ENCODE measurements at regions of chr18 and their contacts with region 1.

Region 1: DNA sequence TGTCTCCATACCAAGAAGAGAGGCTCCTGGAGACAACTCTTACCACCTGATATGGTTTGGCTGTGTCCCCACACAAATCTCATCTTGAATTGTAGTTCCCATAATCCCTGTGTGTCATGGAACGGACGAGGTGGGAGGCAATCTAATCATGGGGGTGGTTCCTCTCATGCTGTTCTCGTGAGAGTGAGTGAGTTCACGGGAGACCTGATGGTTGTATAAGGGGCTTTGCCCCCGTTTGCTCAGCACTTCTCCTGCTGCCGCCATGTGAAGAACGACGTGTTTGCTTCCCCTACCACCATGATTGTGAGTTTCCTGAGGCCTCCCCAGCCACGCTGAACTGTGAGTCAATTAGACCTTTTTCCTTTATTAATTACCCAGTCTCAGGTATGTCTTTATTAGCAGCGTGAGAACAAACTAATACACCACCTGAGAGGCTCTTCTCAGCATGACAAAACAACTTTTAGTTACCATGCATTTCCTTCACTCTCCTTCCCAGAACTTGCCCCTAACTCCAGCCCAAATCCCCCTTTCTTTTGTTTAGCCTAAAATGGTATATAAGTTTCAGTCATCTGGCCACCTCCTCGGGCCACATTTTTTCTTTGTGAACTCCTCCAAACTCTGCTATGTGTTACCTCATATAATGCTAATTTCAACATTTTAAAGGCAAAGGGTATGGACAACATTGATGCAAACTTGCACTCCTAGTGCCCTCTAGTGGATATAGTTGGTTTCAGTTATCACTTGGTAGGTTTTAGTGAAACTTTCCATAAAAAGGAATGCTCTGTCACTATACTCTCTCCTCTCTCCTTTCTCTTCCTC is 58.6 kb upstream of the SLC25A52 start:
- DNase-seq: no peak
- ATAC-seq: peak; percentile 87
- H3K4me3 ChIP-seq: no peak overlapping the region
- H3K27ac ChIP-seq: no peak overlapping the region
- H3K4me1 ChIP-seq: no peaks in the 10 kb centered on the region
- H3K27me3 ChIP-seq: no peaks in the 10 kb centered on the region
- CTCF ChIP-seq: peak; percentile 77

Region 2: DNA sequence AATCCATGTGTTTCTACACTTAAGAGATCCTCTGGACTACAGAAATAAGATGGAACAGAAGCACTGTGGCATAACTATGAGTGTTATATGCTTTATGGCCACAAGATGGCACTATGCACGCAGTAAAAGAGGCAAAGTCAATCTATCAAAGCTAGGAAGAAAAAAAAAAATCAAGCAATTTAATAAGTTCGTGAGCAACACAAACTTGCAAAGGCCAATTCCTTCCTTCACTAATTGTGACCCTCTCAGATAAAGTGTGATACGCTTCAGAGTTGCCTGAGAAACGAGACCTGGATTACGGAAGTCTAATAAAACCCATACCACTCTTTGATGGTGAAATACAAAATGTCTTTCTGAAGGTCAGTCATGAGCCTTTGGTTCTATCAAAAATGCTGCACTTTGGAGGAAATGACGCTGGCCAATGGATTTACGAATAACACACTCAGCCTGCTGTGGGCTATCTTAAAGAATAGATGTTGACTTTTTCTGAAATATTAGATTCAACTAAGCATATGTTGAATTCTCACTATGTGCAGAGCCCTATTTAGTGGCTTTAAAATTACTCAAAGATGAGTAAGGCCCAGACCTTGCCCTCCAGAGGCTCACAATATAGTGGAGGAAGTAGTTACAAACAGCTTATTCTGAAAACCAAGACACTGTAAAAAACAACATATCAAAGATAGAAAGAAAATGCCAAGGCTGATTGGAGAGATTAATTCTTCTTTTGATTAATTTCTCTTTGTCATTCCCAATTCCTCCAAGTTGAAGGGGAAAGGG is 263.2 kb before region 1 on chr18:
- intact Hi-C with region 1: loop called (anchors 10 kb)
- DNase-seq: no peak
- ATAC-seq: peak; percentile 92
- H3K4me3 ChIP-seq: no peak overlapping the region
- H3K27ac ChIP-seq: no peak overlapping the region
- H3K4me1 ChIP-seq: no peaks in the 10 kb centered on the region
- H3K27me3 ChIP-seq: no peaks in the 10 kb centered on the region
- CTCF ChIP-seq: peak; percentile 89

Region 3: DNA sequence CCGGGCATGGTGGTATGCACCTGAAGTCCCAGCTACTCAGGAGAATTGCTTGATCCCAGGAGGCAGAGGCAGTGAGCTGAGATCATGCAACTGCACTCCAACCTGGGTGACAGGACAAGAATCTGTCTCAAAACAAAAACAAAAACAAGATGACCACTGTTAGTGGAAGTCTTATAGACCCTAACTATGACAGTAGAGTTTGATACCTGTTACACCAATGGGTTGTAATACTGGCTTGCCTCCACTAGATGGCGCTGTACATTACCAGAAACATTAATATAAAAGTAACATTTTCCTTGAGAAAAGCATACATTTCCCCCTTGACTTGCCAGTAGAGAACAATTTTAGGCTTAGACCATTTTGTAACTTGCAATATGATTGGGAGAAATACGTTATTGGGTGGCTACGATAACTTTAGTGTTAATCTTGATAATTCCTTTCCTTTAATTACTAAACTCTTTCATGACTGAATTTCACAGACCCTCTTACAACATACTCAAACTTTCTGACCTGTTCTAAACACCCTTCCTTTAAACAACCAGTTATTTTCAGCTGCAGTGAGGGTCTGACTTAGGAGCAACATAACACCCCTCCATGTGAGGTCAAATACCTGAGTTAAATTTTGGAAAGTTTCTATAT is 78.1 kb before region 1 on chr18:
- intact Hi-C with region 1: loop called (anchors 5 kb)
- DNase-seq: no peak
- ATAC-seq: peak; percentile 83
- H3K4me3 ChIP-seq: no peak overlapping the region
- H3K27ac ChIP-seq: no peak overlapping the region
- H3K4me1 ChIP-seq: no peaks in the 10 kb centered on the region
- H3K27me3 ChIP-seq: no peaks in the 10 kb centered on the region
- CTCF ChIP-seq: peak; percentile 97